ENCODE measurements at regions of chr21 and their contacts with region 1.

Region 1: GRCh38 chr21:41901099-41901498 is 22.0 kb upstream of the PRDM15 start:
- DNase-seq: peak; percentile 78
- H3K4me3 Mint-ChIP-seq: no peak overlapping the region
- H3K27ac Mint-ChIP-seq: peak overlapping the region; percentile 66
- H3K4me1 Mint-ChIP-seq: peaks cover 30% of the 10 kb centered on the region
- H3K27me3 Mint-ChIP-seq: no peaks in the 10 kb centered on the region

Region 2: GRCh38 chr21:41879190-41879998 is 21.7 kb before region 1 on chr21 and contains the start of gene PRDM15:
- CTCF ChIA-PET with region 1: interaction called, 3 read pairs
- POLR2A ChIA-PET with region 1: interaction called, 3 read pairs
- intact Hi-C with region 1: loop called (anchors 1 kb)
- DNase-seq: peak; percentile 88
- H3K4me3 Mint-ChIP-seq: peak within 1 kb of the TSS; percentile 85
- H3K27ac Mint-ChIP-seq: peak within 1 kb of the TSS; percentile 94
- H3K4me1 Mint-ChIP-seq: peaks cover 21% of the 10 kb centered on the region
- H3K27me3 Mint-ChIP-seq: no peaks in the 10 kb centered on the region
- total RNA-seq, gene PRDM15: 8.5 to 9.9 TPM

Region 3: DNA sequence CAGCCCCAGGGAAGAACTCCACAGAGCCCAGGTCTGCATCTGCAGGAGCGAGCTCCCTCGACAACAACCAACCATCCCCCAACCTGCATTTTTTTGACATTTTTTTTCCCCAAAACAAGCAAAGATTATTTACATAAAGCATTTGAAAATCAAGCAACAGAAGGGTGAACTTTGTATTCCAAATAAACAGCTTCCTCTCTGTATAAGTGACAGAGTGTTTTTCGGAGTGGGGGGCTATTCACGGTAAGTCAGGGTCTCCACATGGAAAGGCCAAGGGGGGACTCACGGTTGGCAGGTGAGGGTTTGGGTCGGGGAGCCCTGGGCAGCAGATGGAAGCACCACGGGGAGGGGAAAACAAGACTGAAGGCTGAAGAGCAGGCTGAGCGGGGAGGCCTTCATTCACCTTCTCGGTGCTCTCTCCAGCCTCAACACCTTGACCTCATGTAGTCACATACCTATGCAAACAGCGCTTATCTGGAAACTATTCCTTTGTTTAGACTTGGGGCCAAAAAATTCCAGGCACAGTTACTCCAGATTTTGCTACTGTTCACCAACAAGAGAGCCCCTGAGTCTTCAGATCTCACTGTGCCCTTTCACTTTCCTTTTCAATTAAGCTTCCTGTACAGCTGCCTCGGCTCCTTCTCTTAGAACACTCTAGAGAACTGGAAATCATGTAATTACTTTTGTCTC is 25.2 kb after region 1 on chr21:
- CTCF ChIA-PET with region 1: interaction called, 4 read pairs
- POLR2A ChIA-PET with region 1: interaction called, 3 read pairs
- intact Hi-C with region 1: loop called (anchors 1 kb)
- DNase-seq: peak; percentile 36
- H3K4me3 Mint-ChIP-seq: peak overlapping the region; percentile 89
- H3K27ac Mint-ChIP-seq: peak overlapping the region; percentile 96
- H3K4me1 Mint-ChIP-seq: peaks cover 52% of the 10 kb centered on the region
- H3K27me3 Mint-ChIP-seq: no peaks in the 10 kb centered on the region

Region 4: DNA sequence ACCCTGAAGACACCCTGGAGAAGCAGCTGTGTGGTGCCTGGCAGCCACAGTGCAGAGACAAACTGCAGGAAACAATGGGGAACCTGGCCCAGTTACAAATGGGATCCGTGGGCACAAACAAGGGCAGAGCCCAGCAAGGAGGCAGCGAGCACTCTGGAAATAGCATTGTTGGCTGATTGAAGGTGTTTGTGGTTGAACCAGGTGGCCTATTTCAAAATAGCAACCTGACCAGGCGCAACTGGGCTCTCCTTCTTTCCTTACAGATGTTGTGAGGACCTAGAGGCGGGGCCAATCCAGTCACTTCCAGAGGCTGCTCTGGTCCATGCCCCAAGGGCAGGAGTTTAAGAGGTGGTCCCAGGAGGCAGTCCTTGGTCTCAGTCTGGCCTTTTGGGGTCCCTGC is 130.7 kb after region 1 on chr21:
- CTCF ChIA-PET with region 1: no interaction called
- POLR2A ChIA-PET with region 1: no interaction called
- intact Hi-C with region 1: no loop called
- DNase-seq: no peak
- H3K4me3 Mint-ChIP-seq: no peak overlapping the region
- H3K27ac Mint-ChIP-seq: no peak overlapping the region
- H3K4me1 Mint-ChIP-seq: no peaks in the 10 kb centered on the region
- H3K27me3 Mint-ChIP-seq: no peaks in the 10 kb centered on the region